ENCODE measurements at regions of chr3 and their contacts with region 1.

Region 1: DNA sequence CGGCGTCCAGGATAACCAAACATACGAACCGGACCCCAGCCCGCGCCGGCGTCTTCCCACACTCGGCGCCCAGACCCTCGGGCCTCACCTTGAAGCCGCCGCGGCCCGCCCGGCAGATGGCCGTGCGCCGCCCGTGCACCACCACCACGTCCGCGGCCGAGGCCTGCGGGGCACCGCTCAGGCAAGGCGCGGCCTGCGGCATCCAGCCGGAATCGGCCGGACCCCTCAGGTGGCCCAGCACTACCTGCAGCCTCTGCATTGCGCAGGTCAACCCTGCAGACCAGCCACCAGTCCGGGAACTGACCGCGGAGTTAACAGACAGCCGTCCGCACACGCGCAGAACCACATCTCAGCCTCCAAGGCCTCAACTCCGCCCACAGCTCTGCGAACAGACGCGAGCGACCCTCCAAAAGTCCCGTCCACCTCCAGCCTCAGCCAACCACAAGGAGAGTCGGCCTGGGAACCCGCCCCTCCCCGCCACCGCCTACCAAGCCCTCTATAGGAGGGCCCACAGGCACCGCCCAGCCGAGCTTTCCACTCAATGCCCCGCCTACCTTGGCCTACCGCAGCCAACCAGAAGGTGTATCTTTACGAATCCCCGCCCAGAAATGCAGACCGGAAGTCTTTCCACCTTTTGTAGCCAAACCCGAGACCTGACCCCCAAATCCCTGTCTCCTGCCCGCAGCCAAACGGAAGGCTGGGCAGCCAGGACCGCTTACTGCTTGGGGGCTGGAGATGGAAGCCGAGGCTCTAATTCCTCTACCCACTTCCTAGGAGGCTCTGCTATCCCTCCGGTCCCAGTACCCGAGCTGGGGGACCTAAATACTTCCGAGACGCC is at the start of gene ACAA1:
- DNase-seq: peak; percentile 100
- ATAC-seq: peak; percentile 97 to 100 (median 98)
- H3K4me3 ChIP-seq: peak within 1 kb of the TSS; percentile 70 to 99 (median 94)
- H3K27ac ChIP-seq: peak within 1 kb of the TSS; percentile 90 to 99 (median 94)
- H3K4me1 ChIP-seq: peaks cover 0 to 70% (median 35%) of the 10 kb centered on the region in 12 donors
- H3K27me3 ChIP-seq: no peaks in the 10 kb centered on the region
- CTCF ChIP-seq: peak in 1 of 12 donors; percentile 10
- POLR2A ChIP-seq: peak; percentile 60 to 88
- total RNA-seq, gene ACAA1: 84.4 to 139 (median 105) TPM

Region 2: GRCh38 chr3:38164966-38165680 is 28.1 kb after region 1 on chr3 and contains the start of gene OXSR1:
- intact Hi-C with region 1: loop called in 6 of 10 experiments (anchors 1 to 2 kb)
- DNase-seq: peak; percentile 98 to 100 (median 99)
- ATAC-seq: peak; percentile 95 to 98 (median 97)
- H3K4me3 ChIP-seq: peak within 1 kb of the TSS; percentile 65 to 99 (median 91)
- H3K27ac ChIP-seq: peak within 1 kb of the TSS; percentile 89 to 99 (median 97)
- H3K4me1 ChIP-seq: peaks cover 0 to 35% (median 15%) of the 10 kb centered on the region in 12 donors
- H3K27me3 ChIP-seq: no peaks in the 10 kb centered on the region
- CTCF ChIP-seq: no peak
- POLR2A ChIP-seq: peak; percentile 68 to 82
- total RNA-seq, gene OXSR1: 21.4 to 38.3 (median 31.7) TPM

Region 3: GRCh38 chr3:38235466-38235865 is 98.5 kb after region 1 on chr3:
- intact Hi-C with region 1: loop called in 2 of 10 experiments (anchors 10 kb)
- DNase-seq: no peak
- ATAC-seq: no peak
- H3K4me3 ChIP-seq: no peak overlapping the region
- H3K27ac ChIP-seq: no peak overlapping the region
- H3K4me1 ChIP-seq: no peaks in the 10 kb centered on the region
- H3K27me3 ChIP-seq: no peaks in the 10 kb centered on the region
- CTCF ChIP-seq: no peak
- POLR2A ChIP-seq: no peak

Region 4: DNA sequence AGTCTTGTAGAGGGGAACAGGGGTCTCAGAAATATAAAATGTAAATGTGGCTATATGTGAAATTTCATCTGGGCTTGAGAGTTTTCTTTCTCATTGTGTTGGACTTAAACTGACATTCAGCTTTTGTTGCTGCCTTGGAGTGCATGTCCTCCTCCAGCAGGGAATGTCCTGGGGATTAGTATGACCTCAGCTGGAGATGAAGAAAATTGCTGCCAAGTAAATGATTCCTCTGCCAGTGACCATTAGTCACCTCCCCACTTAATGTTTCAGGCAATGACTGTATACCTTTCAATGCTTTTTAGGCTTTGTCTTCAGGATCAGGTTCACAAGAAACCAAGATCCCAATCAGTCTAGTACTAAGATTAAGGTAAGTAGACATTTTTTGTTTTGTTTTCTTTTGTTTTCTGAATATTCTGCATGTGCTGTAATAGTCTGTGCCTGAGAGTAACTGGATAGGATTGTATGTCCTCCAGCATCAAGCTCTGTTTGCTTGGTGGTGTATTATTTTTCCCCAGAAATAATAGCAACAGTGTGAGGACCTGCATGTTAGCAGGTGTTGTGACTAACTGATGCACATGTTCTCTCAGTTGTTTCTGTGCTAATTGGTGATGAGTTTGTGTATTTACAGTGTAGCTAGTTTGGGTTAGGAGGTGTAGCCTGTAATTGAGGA is 110.5 kb after region 1 on chr3:
- intact Hi-C with region 1: loop called in 2 of 10 experiments (anchors 5 to 10 kb)
- DNase-seq: peak in 2 of 5 donors; percentile 18 to 24
- ATAC-seq: peak; percentile 78 to 96 (median 87)
- H3K4me3 ChIP-seq: no peak overlapping the region
- H3K27ac ChIP-seq: no peak overlapping the region
- H3K4me1 ChIP-seq: peaks cover 0 to 9% (median 0%) of the 10 kb centered on the region in 12 donors
- H3K27me3 ChIP-seq: no peaks in the 10 kb centered on the region
- CTCF ChIP-seq: peak in 5 of 12 donors; percentile 4 to 34 (median 19)
- POLR2A ChIP-seq: no peak

Region 5: DNA sequence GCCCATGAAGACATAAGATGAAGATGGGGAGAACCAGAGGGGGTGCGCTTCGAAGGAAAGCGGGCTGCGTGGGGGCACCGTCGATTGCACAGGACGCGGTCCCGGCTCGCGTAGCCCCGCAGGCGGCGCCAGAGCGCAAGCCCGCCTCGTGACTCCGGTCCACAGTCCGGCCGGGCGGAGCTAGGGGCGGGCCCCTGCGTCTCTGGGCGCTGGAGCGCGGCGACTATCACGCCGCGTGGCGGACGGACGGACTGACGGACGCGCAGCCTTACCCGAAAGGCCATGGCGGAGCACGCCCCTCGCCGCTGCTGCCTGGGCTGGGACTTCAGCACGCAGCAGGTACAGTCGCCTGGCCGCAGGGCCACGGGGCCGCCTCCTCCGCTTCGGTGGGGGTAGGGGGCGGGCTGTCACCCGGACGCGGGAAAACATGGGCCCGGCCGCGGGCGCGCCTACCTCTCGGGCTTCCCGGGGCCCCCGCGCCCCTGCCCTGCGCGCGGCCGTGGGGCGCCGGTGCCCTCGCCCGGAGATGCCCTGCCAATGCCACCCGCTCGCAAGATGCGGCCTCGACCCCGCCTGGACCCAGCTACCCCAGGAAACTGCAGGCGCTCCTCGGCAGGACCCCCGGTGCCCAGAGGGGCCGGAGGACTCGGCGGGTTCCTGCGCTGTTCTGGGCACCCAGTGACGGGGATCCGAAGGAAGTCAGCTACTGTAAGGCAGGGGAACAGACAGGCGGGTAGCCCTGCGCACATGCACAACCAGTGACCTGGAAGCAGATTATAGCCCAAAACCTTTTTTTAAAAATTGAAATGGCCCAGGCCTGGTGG is 209.8 kb after region 1 on chr3 and contains the start of gene XYLB:
- intact Hi-C with region 1: loop called in 2 of 10 experiments (anchors 10 kb)
- DNase-seq: peak; percentile 86 to 94 (median 89)
- ATAC-seq: peak; percentile 92 to 100 (median 99)
- H3K4me3 ChIP-seq: peak within 1 kb of the TSS; percentile 44 to 93 (median 65)
- H3K27ac ChIP-seq: peak within 1 kb of the TSS in 5 of 12 donors; percentile 20 to 44 (median 25)
- H3K4me1 ChIP-seq: peaks cover 0 to 29% (median 3%) of the 10 kb centered on the region in 12 donors
- H3K27me3 ChIP-seq: no peaks in the 10 kb centered on the region
- CTCF ChIP-seq: peak; percentile 77 to 94 (median 88)
- POLR2A ChIP-seq: peak in 1 of 2 donors; percentile 29
- total RNA-seq, gene XYLB: 0.35 to 2.9 (median 1.3) TPM

Region 6: GRCh38 chr3:38368238-38368637 is 231.2 kb after region 1 on chr3:
- intact Hi-C with region 1: no loop called
- DNase-seq: no peak
- ATAC-seq: no peak
- H3K4me3 ChIP-seq: no peak overlapping the region
- H3K27ac ChIP-seq: no peak overlapping the region
- H3K4me1 ChIP-seq: no peaks in the 10 kb centered on the region
- H3K27me3 ChIP-seq: no peaks in the 10 kb centered on the region
- CTCF ChIP-seq: no peak
- POLR2A ChIP-seq: no peak

Region 7: DNA sequence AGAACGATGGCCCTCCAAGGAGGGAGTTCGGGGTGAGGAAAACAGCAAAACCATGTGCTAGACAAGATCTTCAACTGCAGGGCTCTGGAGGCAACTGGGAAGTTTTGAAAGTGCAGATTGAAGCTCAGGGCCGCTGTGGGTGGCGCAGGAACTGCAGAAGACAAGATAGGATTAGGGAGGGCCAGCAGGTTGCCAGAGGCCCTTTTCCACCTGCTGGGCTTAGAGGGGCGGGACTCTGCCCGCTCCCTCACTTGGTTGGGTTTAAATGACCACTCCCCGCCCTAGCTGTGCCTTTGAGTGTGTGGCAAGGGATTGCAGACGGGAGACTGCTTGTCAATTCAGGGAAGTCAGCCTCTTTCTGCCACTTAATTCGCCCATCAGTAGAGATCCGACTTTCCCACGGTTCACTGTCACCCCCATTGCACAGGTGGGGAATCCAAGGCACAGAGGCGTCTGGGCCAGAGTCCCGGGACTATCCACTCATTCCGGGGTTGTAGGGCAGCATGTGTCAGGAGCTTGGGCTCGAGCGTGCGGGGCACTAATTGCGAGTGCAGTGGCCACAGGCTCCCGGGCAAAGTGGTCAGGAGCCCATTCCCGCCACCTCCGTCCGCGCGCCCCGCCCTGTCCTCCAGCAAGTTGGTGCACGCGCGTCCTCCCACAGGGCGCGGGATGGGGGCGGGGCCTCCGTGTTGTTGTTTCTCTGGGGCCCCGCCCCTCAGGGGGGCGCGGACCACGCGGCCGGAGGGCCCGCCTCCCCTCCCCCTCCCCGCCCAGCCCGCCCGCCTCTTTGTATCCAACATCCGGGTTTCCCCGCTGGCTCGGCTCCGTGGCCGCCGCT is 316.3 kb after region 1 on chr3 and contains the start of gene ACVR2B:
- intact Hi-C with region 1: loop called in 2 of 10 experiments (anchors 5 to 10 kb)
- DNase-seq: peak; percentile 87 to 96 (median 92)
- ATAC-seq: peak; percentile 86 to 93 (median 90)
- H3K4me3 ChIP-seq: peak within 1 kb of the TSS; percentile 76 to 98 (median 89)
- H3K27ac ChIP-seq: peak within 1 kb of the TSS; percentile 75 to 95 (median 82)
- H3K4me1 ChIP-seq: peaks cover 0 to 38% (median 24%) of the 10 kb centered on the region in 12 donors
- H3K27me3 ChIP-seq: peaks cover 0 to 9% (median 0%) of the 10 kb centered on the region in 9 donors
- CTCF ChIP-seq: no peak
- POLR2A ChIP-seq: no peak
- total RNA-seq, gene ACVR2B: 3.5 to 12.4 (median 6.2) TPM

Measured in heart left ventricle (tissue), 16 donors.